SK-N-SH (cell line): ENCODE measurements at regions of chr22 and their contacts with region 1.

Region 1: DNA sequence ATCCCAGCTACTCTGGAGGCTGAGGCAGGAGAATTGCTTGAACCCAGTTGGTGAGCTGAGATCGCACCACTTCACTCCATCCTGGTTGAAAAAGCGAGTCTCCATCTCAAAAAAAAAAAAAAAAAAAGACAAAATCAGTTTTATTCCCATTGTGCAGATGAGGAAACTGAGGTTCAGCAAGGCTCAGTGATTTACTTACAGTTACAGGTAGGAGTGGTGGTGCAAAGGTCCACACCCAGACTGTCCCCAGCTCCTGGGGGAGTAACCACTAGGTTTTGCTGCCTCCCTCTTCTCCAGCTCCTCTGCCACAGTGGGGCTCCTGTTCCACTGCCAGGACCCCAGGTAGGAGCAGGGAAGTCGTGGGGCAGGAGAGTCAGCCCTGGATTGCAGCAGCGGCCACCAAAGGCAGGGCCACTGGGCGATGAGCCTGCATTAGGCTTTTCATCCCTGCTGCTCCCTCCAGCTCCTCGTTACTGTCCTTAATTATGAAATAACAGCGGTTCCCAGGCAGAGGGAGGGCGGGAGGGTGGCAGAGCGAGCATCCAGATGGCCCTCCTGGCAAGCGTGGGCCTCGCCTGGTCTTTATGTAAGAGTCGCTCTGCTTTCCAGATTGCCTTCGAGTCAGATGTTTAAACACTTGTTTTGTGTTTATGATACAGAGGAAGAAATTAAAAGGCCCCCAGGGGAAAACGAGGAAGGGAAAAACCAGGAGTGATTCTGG is 15.5 kb upstream of the RASD2 start:
- DNase-seq: peak; percentile 88
- H3K4me3 ChIP-seq: no peak overlapping the region
- H3K27ac ChIP-seq: peak overlapping the region in 1 of 2 experiments; percentile 88; a peak in 2 of 4 replicates
- H3K4me1 ChIP-seq: peaks cover 0 to 32% of the 10 kb centered on the region in 2 experiments; a peak in 1 of 4 replicates
- H3K27me3 ChIP-seq: no peaks in the 10 kb centered on the region
- CTCF ChIP-seq: no peak
- EP300 ChIP-seq: peak in 1 of 2 experiments; percentile 95; a peak in 2 of 4 replicates
- RAD21 ChIP-seq: peak; percentile 37

Region 2: DNA sequence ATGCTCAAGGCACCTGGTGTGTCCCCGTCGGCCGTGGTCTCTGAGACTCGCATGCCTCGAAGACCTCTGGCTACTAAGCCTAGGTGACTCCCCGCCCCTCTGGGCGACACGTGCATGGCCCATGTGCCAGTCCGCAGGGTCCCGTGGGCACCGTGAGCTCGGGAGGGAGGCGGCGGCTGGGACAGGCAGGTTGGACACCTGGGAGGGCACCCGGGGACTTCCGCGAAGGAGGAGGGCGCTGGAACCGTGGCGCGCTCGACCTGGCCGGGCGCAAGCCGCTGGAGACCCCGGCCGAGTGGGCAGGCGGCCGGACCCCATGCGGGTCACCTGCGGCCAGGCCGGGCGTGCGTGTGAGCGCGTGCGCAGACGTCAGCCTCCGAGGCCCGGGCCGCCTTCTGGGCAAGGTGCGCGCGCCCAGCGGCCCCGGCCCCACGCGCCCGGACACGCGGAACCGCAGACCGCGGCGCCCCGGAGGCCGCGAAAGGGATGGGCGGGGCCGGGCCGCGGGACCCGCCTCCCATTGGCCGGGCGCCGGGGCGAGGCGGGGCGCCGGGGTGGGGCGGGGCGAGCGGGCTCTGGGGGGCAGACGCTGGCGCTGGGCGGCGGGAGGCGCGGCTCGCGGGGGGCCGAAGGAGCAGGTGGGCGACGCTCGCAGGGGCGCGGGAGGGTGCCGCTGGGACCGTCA is 14.9 kb after region 1 on chr22:
- CTCF ChIA-PET with region 1: interaction called, 60 read pairs
- POLR2A ChIA-PET with region 1: interaction called, 3 read pairs
- DNase-seq: peak; percentile 98
- H3K4me3 ChIP-seq: peak overlapping the region; percentile 58 to 68
- H3K27ac ChIP-seq: no peak overlapping the region; a peak in 1 of 4 replicates
- H3K4me1 ChIP-seq: peaks cover 11 to 13% of the 10 kb centered on the region in 2 experiments; a peak in 2 of 4 replicates
- H3K27me3 ChIP-seq: no peaks in the 10 kb centered on the region
- CTCF ChIP-seq: no peak
- EP300 ChIP-seq: no peak
- RAD21 ChIP-seq: no peak